Calu3 (cell line): ENCODE measurements at regions of chr17 and their contacts with region 1.

Region 1: GRCh38 chr17:61002316-61002736 is 324.7 kb downstream of the BCAS3 start:
- DNase-seq: no peak
- H3K4me3 Mint-ChIP-seq: no peak overlapping the region
- H3K27ac Mint-ChIP-seq: no peak overlapping the region
- H3K4me1 Mint-ChIP-seq: no peaks in the 10 kb centered on the region
- H3K27me3 Mint-ChIP-seq: no peaks in the 10 kb centered on the region
- CTCF ChIP-seq: no peak

Region 2: GRCh38 chr17:60941028-60941427 is 61.3 kb before region 1 on chr17:
- CTCF ChIA-PET with region 1: no interaction called
- intact Hi-C with region 1: no loop called
- DNase-seq: no peak
- H3K4me3 Mint-ChIP-seq: no peak overlapping the region
- H3K27ac Mint-ChIP-seq: no peak overlapping the region
- H3K4me1 Mint-ChIP-seq: no peaks in the 10 kb centered on the region
- H3K27me3 Mint-ChIP-seq: no peaks in the 10 kb centered on the region
- CTCF ChIP-seq: no peak

Region 3: DNA sequence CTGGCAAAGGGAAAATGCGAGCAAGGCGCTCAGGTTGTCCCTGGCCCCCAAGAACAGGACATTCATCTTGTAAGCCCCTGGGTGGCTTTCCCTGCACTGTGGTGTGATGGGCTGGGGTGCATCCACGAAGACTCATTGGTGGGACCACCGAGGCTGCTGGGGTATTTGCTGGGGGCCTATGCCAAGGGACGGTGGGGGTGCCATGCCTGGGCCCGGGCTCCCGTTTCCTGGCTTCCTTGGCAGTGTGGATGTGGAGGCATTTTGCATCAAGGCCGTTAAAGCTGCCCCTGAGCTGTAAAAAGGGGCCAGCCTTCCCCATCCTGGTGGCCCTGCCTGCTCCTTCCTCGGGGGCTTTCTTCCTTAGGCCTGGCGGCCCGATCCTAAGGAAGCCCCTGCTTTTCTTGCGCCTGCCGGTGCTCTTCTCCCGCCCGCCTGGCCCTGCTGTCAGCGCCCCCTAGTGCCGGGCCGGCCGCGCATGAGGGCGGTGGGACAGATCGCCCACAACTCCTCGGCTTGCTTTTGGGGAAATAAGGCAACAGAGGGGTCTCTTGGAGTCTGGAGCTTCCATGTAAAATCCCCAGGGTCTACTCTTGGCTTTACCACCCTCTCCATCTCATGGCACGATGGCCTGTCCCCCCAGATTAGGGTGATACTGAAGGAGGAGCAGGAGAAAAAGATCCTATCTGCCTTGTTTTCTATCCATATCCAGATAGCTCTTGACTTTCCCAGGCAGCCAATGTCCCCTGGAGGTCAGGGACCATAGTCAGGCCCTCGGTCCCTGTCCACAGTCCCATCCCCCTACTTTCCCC is 387.5 kb after region 1 on chr17:
- CTCF ChIA-PET with region 1: no interaction called
- intact Hi-C with region 1: loop called (anchors 5 kb)
- DNase-seq: peak; percentile 65
- H3K4me3 Mint-ChIP-seq: no peak overlapping the region
- H3K27ac Mint-ChIP-seq: no peak overlapping the region
- H3K4me1 Mint-ChIP-seq: no peaks in the 10 kb centered on the region
- H3K27me3 Mint-ChIP-seq: peaks cover 14% of the 10 kb centered on the region
- CTCF ChIP-seq: peak; percentile 46